ENCODE measurements at regions of chr4 and their contacts with region 1.

Region 1: DNA sequence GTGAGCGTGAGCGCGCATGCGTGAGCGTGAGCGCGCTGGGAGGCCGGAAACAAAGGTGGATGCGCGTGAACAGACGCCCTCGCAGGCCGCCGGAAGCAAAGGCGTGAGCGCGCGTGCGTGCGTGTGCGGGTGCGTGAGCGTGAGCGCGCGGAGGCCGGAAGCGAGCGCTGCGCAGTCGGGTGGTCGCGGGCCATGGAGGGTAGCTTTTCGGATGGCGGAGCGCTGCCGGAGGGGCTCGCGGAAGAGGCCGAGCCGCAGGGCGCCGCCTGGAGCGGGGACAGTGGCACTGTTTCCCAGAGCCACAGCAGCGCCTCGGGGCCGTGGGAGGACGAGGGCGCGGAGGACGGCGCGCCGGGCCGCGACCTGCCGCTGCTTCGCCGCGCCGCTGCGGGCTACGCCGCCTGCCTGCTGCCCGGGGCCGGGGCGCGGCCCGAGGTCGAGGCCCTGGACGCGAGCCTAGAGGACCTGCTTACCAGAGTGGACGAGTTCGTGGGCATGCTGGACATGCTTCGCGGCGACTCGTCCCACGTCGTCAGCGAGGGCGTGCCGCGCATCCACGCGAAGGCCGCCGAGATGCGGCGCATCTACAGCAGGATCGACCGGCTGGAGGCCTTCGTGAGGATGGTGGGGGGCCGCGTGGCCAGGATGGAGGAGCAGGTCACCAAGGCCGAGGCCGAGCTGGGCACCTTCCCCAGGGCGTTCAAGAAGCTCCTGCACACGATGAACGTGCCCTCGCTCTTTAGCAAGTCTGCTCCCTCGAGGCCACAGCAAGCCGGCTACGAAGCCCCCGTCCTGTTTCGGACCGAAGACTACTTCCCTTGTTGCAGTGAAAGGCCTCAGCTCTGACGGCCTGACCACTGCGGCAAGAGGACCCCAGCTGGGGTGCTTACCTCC is at the start of gene BLOC1S4:
- DNase-seq: peak; percentile 91 to 94
- ATAC-seq: peak; percentile 92 to 96 (median 94)
- H3K4me3 ChIP-seq: peak within 1 kb of the TSS; percentile 95
- H3K27ac ChIP-seq: peak within 1 kb of the TSS; percentile 99
- H3K4me1 ChIP-seq: peaks cover 31% of the 10 kb centered on the region
- H3K27me3 ChIP-seq: no peaks in the 10 kb centered on the region
- CTCF ChIP-seq: no peak
- total RNA-seq, gene BLOC1S4: 9.3 to 15.0 (median 14.2) TPM

Region 2: GRCh38 chr4:6673660-6674499 is 42.4 kb before region 1 on chr4:
- intact Hi-C with region 1: no loop called
- DNase-seq: peak; percentile 92 to 98
- ATAC-seq: peak; percentile 94 to 96 (median 94)
- H3K4me3 ChIP-seq: peak overlapping the region; percentile 78
- H3K27ac ChIP-seq: peak overlapping the region; percentile 90
- H3K4me1 ChIP-seq: peaks cover 31% of the 10 kb centered on the region
- H3K27me3 ChIP-seq: no peaks in the 10 kb centered on the region
- CTCF ChIP-seq: no peak

Region 3: GRCh38 chr4:6783053-6783981 is 67.1 kb after region 1 on chr4:
- intact Hi-C with region 1: loop called in 1 of 2 experiments (anchors 5 kb)
- DNase-seq: peak; percentile 93 to 95
- ATAC-seq: peak; percentile 81 to 86 (median 84)
- H3K4me3 ChIP-seq: peak overlapping the region; percentile 93
- H3K27ac ChIP-seq: peak overlapping the region; percentile 99
- H3K4me1 ChIP-seq: peaks cover 62% of the 10 kb centered on the region
- H3K27me3 ChIP-seq: no peaks in the 10 kb centered on the region
- CTCF ChIP-seq: no peak

Region 4: GRCh38 chr4:6873792-6874461 is 157.7 kb after region 1 on chr4:
- intact Hi-C with region 1: loop called (anchors 1 to 5 kb)
- DNase-seq: peak; percentile 70 to 85
- ATAC-seq: peak; percentile 44 to 62 (median 52)
- H3K4me3 ChIP-seq: no peak overlapping the region
- H3K27ac ChIP-seq: peak overlapping the region; percentile 79
- H3K4me1 ChIP-seq: peaks cover 56% of the 10 kb centered on the region
- H3K27me3 ChIP-seq: no peaks in the 10 kb centered on the region
- CTCF ChIP-seq: peak; percentile 75

Region 5: DNA sequence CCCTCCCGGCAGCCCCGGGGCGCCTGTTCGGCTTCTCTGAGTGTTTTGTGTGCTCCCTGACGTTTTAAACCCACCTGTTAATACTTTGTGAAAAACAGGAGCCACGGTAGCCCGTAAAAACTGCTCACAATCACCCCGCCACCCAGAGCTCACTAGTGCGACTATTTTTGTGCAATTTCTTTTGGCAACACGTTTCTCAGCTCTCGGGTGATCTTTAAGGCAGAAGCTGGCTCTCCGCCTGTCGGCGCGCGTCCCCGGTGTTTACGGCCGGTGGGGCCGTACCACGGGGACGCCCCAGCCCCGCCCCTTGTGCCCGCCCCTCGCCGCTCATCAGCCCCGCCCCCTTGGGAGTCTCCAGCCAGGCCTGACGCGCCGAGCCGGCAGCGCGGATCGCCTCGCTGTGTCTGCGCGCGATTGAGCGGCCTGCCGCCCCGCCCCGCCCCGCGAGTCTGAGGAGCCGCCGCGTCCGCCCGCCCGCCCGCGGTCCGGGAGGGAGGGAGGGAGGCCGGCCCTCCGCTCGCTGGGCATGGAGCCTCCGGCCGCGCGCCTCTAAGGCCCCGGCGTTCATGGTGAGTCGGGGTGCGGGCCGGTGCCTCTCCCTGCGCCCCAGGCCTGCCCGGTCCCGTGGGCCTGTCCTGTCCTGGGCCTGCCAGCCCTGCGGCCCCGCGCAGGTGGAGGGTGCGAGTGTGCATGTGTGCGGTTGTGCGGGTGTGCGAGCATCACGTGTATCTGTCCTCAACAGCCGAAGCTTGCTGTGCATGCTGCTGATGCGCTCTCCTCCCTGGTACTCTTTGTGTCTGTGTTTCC is 270.7 kb after region 1 on chr4:
- intact Hi-C with region 1: loop called (anchors 1 to 10 kb)
- DNase-seq: peak; percentile 96 to 98
- ATAC-seq: peak; percentile 93 to 97 (median 96)
- H3K4me3 ChIP-seq: peak overlapping the region; percentile 67
- H3K27ac ChIP-seq: peak overlapping the region; percentile 87
- H3K4me1 ChIP-seq: peaks cover 75% of the 10 kb centered on the region
- H3K27me3 ChIP-seq: no peaks in the 10 kb centered on the region
- CTCF ChIP-seq: no peak

Region 6: GRCh38 chr4:7067452-7068278 is 351.4 kb after region 1 on chr4 and contains the start of gene GRPEL1:
- intact Hi-C with region 1: loop called (anchors 5 kb)
- DNase-seq: peak; percentile 100
- ATAC-seq: peak; percentile 94 to 97 (median 96)
- H3K4me3 ChIP-seq: peak within 1 kb of the TSS; percentile 84
- H3K27ac ChIP-seq: peak within 1 kb of the TSS; percentile 93
- H3K4me1 ChIP-seq: peaks cover 23% of the 10 kb centered on the region
- H3K27me3 ChIP-seq: no peaks in the 10 kb centered on the region
- CTCF ChIP-seq: no peak
- total RNA-seq, gene GRPEL1: 41.4 to 66.1 (median 57.8) TPM

Region 7: GRCh38 chr4:7081891-7082471 is 365.7 kb after region 1 on chr4:
- intact Hi-C with region 1: loop called in 1 of 2 experiments (anchors 5 kb)
- DNase-seq: peak; percentile 57 to 77
- ATAC-seq: peak; percentile 94 to 99 (median 97)
- H3K4me3 ChIP-seq: no peak overlapping the region
- H3K27ac ChIP-seq: no peak overlapping the region
- H3K4me1 ChIP-seq: no peaks in the 10 kb centered on the region
- H3K27me3 ChIP-seq: peaks cover 0 to 7% (median 0%) of the 10 kb centered on the region in 3 donors
- CTCF ChIP-seq: peak; percentile 62

Region 8: GRCh38 chr4:8607603-8608481 is 1891.6 kb after region 1 on chr4:
- intact Hi-C with region 1: loop called in 1 of 2 experiments (anchors 10 kb)
- DNase-seq: no peak
- ATAC-seq: peak in 3 of 4 donors; percentile 41 to 52 (median 41)
- H3K4me3 ChIP-seq: no peak overlapping the region
- H3K27ac ChIP-seq: no peak overlapping the region
- H3K4me1 ChIP-seq: no peaks in the 10 kb centered on the region
- H3K27me3 ChIP-seq: peaks cover 0 to 2% (median 0%) of the 10 kb centered on the region in 3 donors
- CTCF ChIP-seq: peak; percentile 85

Measured in psoas muscle (tissue), 8 donors.